ENCODE measurements at regions of chr6 and their contacts with region 1.

Region 1: GRCh38 chr6:37018198-37019064 is 13.0 kb downstream of the FGD2 start:
- DNase-seq: peak; percentile 97
- ATAC-seq: peak; percentile 97
- H3K4me3 Mint-ChIP-seq: peak overlapping the region; percentile 5
- H3K27ac Mint-ChIP-seq: peak overlapping the region; percentile 80
- H3K4me1 Mint-ChIP-seq: peaks cover 52% of the 10 kb centered on the region
- H3K27me3 Mint-ChIP-seq: no peaks in the 10 kb centered on the region

Region 2: DNA sequence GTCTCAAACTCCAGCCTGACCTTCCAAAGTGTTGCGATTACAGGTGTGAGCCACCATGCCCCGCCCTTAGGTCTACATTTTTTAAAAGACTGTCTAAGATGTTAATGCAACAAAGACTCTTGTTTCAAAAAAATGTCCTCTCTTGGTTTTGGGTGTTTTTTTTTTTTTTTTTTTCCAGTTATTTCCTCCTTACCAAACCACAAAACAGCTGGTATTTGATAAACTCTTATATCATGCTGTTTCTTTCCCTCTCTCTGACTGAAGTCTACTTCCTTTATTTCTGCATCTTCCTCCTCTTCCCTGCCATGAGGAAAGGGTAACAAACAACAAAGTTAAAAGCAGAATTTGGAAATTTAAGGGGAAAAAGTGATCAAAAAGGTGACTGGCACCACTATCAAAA is 492.4 kb before region 1 on chr6:
- CTCF ChIA-PET with region 1: no interaction called
- DNase-seq: no peak
- ATAC-seq: no peak
- H3K4me3 Mint-ChIP-seq: no peak overlapping the region
- H3K27ac Mint-ChIP-seq: peak overlapping the region; percentile 54
- H3K4me1 Mint-ChIP-seq: peaks cover 15% of the 10 kb centered on the region
- H3K27me3 Mint-ChIP-seq: no peaks in the 10 kb centered on the region

Region 3: GRCh38 chr6:36599791-36600209 is 418.6 kb before region 1 on chr6:
- CTCF ChIA-PET with region 1: no interaction called
- DNase-seq: peak; percentile 87
- ATAC-seq: peak; percentile 83
- H3K4me3 Mint-ChIP-seq: peak overlapping the region; percentile 98
- H3K27ac Mint-ChIP-seq: peak overlapping the region; percentile 79
- H3K4me1 Mint-ChIP-seq: peaks cover 73% of the 10 kb centered on the region
- H3K27me3 Mint-ChIP-seq: no peaks in the 10 kb centered on the region

Region 4: GRCh38 chr6:36788768-36789167 is 229.7 kb before region 1 on chr6:
- CTCF ChIA-PET with region 1: interaction called, 39 read pairs
- DNase-seq: no peak
- ATAC-seq: no peak
- H3K4me3 Mint-ChIP-seq: no peak overlapping the region
- H3K27ac Mint-ChIP-seq: no peak overlapping the region
- H3K4me1 Mint-ChIP-seq: no peaks in the 10 kb centered on the region
- H3K27me3 Mint-ChIP-seq: peaks cover 50% of the 10 kb centered on the region

Region 5: GRCh38 chr6:36912586-36912985 is 105.8 kb before region 1 on chr6:
- CTCF ChIA-PET with region 1: interaction called, 43 read pairs
- DNase-seq: peak; percentile 88
- ATAC-seq: peak; percentile 89
- H3K4me3 Mint-ChIP-seq: peak overlapping the region; percentile 66
- H3K27ac Mint-ChIP-seq: peak overlapping the region; percentile 89
- H3K4me1 Mint-ChIP-seq: peaks cover 61% of the 10 kb centered on the region
- H3K27me3 Mint-ChIP-seq: no peaks in the 10 kb centered on the region

Region 6: DNA sequence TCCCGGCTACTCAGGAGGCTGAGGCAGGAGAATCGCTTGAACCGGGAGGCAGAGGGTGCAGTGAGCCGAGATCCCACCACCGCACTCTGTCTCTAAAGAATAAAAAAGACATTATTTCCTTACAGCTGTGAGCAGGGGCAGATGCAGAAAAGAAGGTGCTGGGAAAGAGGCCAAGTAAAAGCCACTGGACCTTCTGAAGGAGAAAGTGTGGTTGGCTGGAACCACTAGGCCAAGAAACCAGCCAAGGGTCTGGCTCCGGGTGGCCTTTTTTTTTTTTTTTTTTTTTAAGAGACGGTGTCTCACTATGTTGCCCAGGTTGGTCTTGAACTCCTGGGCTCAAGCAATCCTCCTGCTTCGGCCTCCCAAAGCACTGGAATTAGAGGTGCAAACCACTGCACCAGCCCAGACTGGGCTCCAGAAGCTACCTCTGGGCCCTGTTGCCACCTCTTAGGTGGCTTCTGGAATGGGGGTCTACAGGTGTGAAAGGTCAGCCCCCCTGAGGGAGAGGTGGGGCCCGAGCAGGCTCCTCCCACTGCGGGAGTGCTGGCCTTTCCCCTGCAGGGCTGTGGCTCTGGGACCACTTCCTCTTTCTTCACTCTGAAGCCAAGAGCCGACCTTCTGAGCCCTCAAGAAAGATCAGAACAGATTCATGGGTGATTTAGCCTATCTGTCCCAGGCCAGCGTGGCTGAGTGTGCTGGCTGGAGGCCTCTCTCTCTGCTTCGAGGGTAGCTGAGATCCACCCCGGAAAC is 13.2 kb before region 1 on chr6 and contains the start of gene FGD2:
- CTCF ChIA-PET with region 1: interaction called, 116 read pairs
- DNase-seq: no peak
- ATAC-seq: peak; percentile 43
- H3K4me3 Mint-ChIP-seq: peak within 1 kb of the TSS; percentile 62
- H3K27ac Mint-ChIP-seq: peak within 1 kb of the TSS; percentile 55
- H3K4me1 Mint-ChIP-seq: peaks cover 32% of the 10 kb centered on the region
- H3K27me3 Mint-ChIP-seq: peaks cover 7% of the 10 kb centered on the region
- total RNA-seq, gene FGD2: 15.6 to 26.3 TPM

Region 7: DNA sequence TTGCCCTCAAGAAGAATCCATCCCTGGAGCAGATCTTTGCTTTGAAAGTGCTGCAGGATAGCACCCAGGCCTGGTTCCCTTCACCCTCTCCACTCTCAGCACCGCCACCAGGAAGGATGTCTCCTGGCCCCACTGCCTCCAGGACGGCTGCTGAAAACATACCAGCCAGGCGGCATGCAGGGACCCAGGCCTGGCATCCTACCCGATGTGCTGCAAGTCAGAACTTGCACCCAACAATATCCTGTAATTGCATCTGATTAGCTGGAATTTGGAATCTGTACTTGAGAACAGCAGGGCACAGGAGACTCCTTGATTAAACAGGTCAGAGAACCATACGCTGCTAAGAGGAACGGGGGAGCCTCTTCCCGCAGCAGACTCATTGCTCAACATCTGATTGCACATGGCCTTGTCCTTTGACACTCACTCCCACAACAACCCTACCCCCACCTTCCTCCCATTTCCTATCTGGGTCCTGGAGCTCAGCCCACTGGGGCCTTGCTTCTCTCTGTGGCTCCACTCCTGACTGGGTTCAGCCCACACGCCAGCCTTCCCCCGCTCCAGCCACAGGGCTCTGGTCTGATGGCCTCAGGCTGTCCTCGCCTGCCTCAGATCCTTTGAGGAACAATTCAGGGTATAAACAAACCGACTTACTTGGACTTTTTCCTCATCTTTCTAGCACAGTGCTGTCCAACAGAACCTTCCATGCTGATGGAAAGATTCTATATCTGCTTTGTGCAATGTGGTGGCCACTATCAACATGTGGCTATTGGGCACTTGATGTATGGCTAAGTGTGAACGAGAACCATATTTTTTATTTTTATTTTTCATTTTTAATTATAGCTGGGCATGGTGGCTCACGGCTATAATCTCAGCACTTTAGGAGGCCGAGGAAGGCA is 65.1 kb after region 1 on chr6:
- CTCF ChIA-PET with region 1: no interaction called
- DNase-seq: no peak
- ATAC-seq: no peak
- H3K4me3 Mint-ChIP-seq: no peak overlapping the region
- H3K27ac Mint-ChIP-seq: no peak overlapping the region
- H3K4me1 Mint-ChIP-seq: peaks cover 2% of the 10 kb centered on the region
- H3K27me3 Mint-ChIP-seq: peaks cover 4% of the 10 kb centered on the region

Region 8: DNA sequence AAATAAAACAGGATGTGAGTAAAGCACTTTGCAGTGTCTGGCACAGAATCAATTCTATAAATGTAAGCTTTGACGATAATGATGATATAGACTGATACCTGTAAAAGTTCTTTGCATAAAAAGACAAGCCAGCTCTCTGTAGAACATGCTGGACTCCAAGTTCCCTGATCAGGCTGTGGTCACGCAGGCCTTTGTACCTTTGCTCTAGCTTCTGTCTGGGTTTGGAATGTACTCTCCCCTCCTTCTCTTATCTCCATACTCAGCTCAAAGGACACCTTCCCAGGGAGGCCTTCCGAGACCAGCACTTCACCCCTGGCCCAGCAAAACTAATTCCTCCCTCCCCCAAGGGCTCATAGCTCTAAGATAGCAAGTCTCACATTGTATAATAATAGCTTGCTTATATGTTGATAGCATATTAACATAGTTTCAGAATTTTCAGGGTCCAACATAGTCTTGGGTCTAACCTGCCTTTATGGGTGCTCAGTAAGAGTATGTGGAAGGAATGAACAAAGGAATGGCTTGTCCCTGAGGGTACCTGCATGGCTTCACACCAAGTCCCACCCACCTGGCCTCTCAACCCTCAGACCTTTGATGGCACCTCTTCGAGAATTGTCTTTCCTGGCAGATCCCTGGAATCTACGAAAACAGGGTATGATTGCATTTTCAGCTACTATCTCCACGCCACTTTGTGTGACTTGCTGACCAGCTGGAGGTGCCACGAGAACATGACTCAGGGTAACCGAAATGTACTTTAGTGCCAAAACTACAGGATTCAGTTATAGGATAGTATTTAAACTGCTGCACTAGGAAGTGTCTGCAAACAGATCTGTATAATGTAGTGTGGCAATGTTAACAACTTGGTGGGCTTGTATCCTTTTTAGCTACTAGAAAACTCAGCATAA is 109.8 kb after region 1 on chr6:
- CTCF ChIA-PET with region 1: no interaction called
- DNase-seq: no peak
- ATAC-seq: no peak
- H3K4me3 Mint-ChIP-seq: no peak overlapping the region
- H3K27ac Mint-ChIP-seq: no peak overlapping the region
- H3K4me1 Mint-ChIP-seq: peaks cover 15% of the 10 kb centered on the region
- H3K27me3 Mint-ChIP-seq: peaks cover 3% of the 10 kb centered on the region

Region 9: DNA sequence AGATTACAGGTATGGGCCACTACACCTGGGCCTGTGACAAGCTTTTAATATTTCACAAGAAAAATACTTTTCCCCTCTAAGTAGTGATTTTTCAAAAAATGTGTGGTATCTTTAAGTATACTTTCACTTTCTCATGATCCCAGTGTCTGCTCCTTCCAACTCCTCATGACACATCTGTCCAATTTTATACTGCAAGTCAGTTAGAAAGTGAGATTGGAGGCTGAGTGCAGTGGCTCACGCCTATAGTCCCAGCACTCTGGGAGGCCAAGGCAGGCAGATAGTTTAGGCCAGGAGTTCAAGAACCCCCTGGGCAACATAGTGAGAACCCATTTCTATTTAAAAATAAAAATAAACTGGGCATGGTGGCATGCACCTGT is 171.7 kb after region 1 on chr6:
- CTCF ChIA-PET with region 1: interaction called, 424 read pairs
- DNase-seq: no peak
- ATAC-seq: peak; percentile 31
- H3K4me3 Mint-ChIP-seq: no peak overlapping the region
- H3K27ac Mint-ChIP-seq: peak overlapping the region; percentile 81
- H3K4me1 Mint-ChIP-seq: peaks cover 73% of the 10 kb centered on the region
- H3K27me3 Mint-ChIP-seq: no peaks in the 10 kb centered on the region

Region 10: GRCh38 chr6:37314487-37315156 is 296.2 kb after region 1 on chr6:
- CTCF ChIA-PET with region 1: interaction called, 35 read pairs
- DNase-seq: peak; percentile 67
- ATAC-seq: peak; percentile 82
- H3K4me3 Mint-ChIP-seq: no peak overlapping the region
- H3K27ac Mint-ChIP-seq: peak overlapping the region; percentile 58
- H3K4me1 Mint-ChIP-seq: peaks cover 7% of the 10 kb centered on the region
- H3K27me3 Mint-ChIP-seq: no peaks in the 10 kb centered on the region